ENCODE measurements at regions of chr18 and their contacts with region 1.

Region 1: GRCh38 chr18:61502472-61502871 is 169.2 kb downstream of the CDH20 start:
- DNase-seq: no peak
- H3K4me3 ChIP-seq: no peak overlapping the region
- H3K27ac ChIP-seq: no peak overlapping the region
- H3K4me1 ChIP-seq: no peaks in the 10 kb centered on the region
- H3K27me3 ChIP-seq: peaks cover 0 to 30% (median 0%) of the 10 kb centered on the region in 7 donors
- CTCF ChIP-seq: peak in 10 of 11 experiments; percentile 28 to 76 (median 60)
- POLR2A ChIP-seq: no peak

Region 2: DNA sequence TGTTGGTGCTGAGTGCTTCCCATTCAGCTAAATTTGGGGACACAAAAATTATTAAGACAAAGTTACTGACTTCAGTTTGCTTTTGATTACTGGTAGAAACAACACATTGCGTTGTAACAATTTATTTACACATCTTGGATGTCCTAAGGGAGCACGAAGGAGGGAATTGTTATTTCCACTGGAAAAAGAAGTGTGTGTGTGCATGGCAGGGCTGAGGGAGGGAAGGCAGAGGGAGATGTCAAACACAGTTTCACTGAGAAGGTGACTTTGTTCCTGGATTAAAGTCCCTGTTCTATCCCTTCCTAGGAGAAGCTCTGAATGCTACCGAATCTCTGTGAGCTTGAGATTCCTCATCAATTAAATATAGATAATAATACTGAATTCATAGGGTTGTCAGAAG is 173.1 kb before region 1 on chr18:
- intact Hi-C with region 1: loop called (anchors 5 kb)
- DNase-seq: no peak
- H3K4me3 ChIP-seq: no peak overlapping the region
- H3K27ac ChIP-seq: no peak overlapping the region
- H3K4me1 ChIP-seq: peaks cover 0 to 15% (median 12%) of the 10 kb centered on the region in 6 donors
- H3K27me3 ChIP-seq: peaks cover 0 to 28% (median 14%) of the 10 kb centered on the region in 7 donors
- CTCF ChIP-seq: no peak
- POLR2A ChIP-seq: no peak

Region 3: DNA sequence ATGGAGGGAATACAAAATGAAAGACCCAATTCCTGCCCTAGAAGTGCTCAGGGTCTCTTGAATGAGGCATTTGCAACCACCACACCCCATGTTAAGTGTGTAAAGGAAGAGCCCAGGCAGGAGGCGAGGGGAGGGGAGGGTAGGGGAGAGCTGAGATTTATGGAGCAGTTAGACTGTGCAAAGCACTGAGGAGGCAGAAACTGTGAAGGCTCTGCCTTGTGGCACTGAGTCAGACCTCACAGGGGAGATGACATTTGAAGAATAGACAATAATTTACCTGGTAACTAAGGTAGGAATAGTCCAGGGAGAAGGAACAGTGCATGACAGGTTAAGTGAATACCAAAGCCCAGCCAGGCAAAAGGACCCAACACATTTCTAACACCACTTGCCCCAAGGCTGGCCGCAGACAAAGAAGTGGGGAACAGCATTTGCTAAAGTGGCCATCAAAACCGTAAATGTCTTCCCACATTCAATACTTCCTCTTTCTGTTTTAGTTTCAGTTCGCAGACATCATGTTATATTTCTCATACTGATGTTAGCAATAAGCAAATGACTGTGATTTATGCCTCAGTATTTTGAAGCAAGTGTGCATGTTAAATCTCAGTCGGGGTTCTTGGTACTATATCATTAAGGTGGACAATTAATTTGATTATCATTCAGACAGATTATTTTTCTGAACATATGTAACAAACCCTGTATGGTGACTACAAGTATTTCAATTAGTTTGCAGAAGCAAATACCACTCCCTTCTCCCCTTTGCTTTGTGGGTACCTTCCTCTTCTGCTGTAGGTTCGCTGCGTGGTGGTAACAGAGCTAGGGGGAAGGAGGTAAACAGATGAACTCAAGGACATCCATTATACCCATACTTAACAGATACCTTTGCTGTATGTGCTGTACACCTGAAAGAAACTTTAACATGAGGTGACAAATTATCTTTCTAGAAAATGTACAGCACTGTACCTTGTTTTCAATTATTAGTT is 141.8 kb before region 1 on chr18:
- intact Hi-C with region 1: no loop called
- DNase-seq: no peak
- H3K4me3 ChIP-seq: peak overlapping the region in 1 of 8 donors; percentile 28
- H3K27ac ChIP-seq: peak overlapping the region in 2 of 8 donors; percentile 10 to 29
- H3K4me1 ChIP-seq: no peaks in the 10 kb centered on the region
- H3K27me3 ChIP-seq: no peaks in the 10 kb centered on the region
- CTCF ChIP-seq: no peak
- POLR2A ChIP-seq: no peak

Measured in spleen (tissue), 13 donors.